A673 (cell line): ENCODE measurements at regions of chr1 and their contacts with region 1.

Region 1: DNA sequence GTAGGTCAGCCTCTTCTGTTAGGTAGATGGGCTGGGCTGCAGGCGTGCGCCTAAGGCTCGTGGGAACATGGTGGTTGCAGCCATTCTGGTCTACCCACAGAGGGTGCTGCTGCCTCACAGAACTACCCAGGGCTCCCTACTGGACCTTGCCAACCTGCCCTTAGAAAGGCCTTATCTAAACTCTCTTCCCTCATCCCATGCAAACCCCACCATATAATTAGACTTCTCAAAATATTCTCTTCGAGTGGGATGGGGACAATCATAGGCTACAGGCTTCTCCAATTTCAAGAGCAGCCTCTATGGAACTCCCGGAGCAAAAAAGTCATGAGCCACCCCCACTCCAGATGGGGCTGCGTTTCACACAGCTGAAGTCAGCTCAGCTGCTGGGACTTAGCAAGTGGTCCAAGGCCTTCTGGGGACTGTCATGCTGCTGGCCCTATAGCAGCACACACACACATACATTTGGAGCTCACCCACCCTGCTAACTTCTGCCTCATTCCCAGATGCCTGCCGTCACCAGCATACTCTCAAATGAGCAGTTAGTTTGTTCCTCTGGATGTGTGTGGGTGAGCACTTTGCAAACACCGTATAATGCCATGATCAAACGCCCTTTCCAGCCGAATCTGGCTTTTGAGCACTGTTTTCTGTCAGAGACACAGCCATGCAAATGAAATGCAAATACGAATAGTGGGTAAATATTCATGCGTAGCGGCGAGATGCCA is 6.1 kb upstream of the SDHB start:
- DNase-seq: peak; percentile 85
- H3K4me3 ChIP-seq: peak overlapping the region; percentile 22
- H3K27ac ChIP-seq: peak overlapping the region; percentile 88
- H3K4me1 ChIP-seq: peaks cover 40% of the 10 kb centered on the region
- H3K27me3 ChIP-seq: no peaks in the 10 kb centered on the region
- CTCF ChIP-seq: peak; percentile 95

Region 2: DNA sequence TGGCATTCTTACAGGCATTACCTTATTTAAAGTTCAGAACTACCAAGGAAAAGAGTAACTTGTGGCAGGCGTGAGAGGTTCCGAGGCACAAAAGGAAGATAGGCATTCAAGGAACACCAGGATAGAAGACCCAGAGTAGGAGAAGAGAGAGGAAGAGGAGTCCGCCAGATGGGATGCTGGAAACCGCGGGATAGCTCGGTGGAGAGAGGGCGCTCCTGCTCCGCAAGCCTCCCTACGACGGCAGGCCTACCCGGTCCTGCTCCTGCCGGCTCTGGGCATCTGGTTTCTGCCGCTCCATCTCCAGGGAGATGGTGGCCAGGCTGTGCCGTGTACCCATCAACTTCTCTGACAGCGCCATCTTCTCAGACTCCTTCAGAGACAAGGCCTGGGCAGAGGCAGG is 441.2 kb before region 1 on chr1:
- CTCF ChIA-PET with region 1: no interaction called
- POLR2A ChIA-PET with region 1: no interaction called
- intact Hi-C with region 1: no loop called
- DNase-seq: no peak
- H3K4me3 ChIP-seq: no peak overlapping the region
- H3K27ac ChIP-seq: peak overlapping the region; percentile 1
- H3K4me1 ChIP-seq: peaks cover 6% of the 10 kb centered on the region
- H3K27me3 ChIP-seq: no peaks in the 10 kb centered on the region
- CTCF ChIP-seq: no peak

Region 3: DNA sequence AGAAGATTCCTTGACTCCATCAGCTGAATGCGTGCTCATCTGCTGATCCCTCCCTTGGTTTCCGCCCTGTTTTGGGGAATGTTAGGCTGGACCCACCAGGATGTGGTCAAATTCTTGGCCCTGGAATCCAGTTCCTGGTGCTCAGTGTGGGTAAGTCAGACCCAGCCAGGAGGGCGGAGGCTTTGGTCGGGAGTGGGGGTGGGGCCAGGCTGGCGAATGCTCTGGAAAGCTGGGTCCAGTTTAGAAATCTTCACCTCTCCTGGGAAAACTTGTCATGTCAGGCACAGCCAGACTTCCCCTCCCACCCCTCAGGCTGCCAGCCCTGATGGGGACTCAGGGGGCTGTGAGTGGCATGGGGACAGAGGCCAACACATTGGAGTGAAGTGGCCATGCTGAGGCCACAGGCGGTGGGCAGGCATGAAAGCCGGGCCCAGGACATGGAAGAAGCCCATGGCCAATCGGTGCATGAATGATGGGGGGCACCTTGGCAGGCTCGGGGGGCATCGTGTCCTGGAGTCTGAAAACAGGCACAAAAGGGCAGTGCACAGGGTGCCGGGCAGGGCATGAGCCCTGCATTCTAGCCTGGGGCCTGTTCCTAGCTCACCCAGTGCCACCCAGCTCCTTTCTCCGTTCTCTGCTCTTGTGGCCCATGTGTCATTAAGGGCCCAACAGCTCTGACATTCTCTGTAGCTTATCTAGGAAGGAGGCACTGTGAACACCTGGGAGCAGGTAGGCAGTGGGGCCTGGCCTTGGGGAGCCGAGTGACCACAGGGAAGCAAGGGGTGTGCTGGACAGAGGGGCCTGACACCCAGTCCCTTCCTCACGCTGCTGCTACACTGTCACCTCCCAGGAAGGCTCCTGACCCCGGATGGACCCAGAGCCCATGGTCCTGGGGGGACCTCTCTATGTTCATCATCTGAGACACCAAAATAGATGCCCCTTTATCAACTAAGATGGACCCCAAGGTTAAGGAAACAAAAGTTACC is 130.4 kb after region 1 on chr1:
- CTCF ChIA-PET with region 1: no interaction called
- POLR2A ChIA-PET with region 1: no interaction called
- intact Hi-C with region 1: no loop called
- DNase-seq: no peak
- H3K4me3 ChIP-seq: no peak overlapping the region
- H3K27ac ChIP-seq: no peak overlapping the region
- H3K4me1 ChIP-seq: peaks cover 26% of the 10 kb centered on the region
- H3K27me3 ChIP-seq: no peaks in the 10 kb centered on the region
- CTCF ChIP-seq: no peak

Region 4: GRCh38 chr1:17236779-17237560 is 177.1 kb after region 1 on chr1:
- CTCF ChIA-PET with region 1: interaction called, 5 read pairs
- POLR2A ChIA-PET with region 1: interaction called, 8 read pairs
- intact Hi-C with region 1: loop called (anchors 2 kb)
- DNase-seq: peak; percentile 94
- H3K4me3 ChIP-seq: no peak overlapping the region
- H3K27ac ChIP-seq: peak overlapping the region; percentile 84
- H3K4me1 ChIP-seq: peaks cover 41% of the 10 kb centered on the region
- H3K27me3 ChIP-seq: no peaks in the 10 kb centered on the region
- CTCF ChIP-seq: peak; percentile 90

Region 5: GRCh38 chr1:17335821-17336710 is 276.2 kb after region 1 on chr1:
- CTCF ChIA-PET with region 1: no interaction called
- POLR2A ChIA-PET with region 1: no interaction called
- intact Hi-C with region 1: loop called (anchors 2 kb)
- DNase-seq: peak; percentile 82
- H3K4me3 ChIP-seq: no peak overlapping the region
- H3K27ac ChIP-seq: no peak overlapping the region
- H3K4me1 ChIP-seq: no peaks in the 10 kb centered on the region
- H3K27me3 ChIP-seq: no peaks in the 10 kb centered on the region
- CTCF ChIP-seq: peak; percentile 97

Region 6: GRCh38 chr1:17451731-17452130 is 391.8 kb after region 1 on chr1:
- CTCF ChIA-PET with region 1: no interaction called
- POLR2A ChIA-PET with region 1: interaction called, 26 read pairs
- intact Hi-C with region 1: no loop called
- DNase-seq: no peak
- H3K4me3 ChIP-seq: no peak overlapping the region
- H3K27ac ChIP-seq: no peak overlapping the region
- H3K4me1 ChIP-seq: no peaks in the 10 kb centered on the region
- H3K27me3 ChIP-seq: no peaks in the 10 kb centered on the region
- CTCF ChIP-seq: no peak